Psoas muscle (tissue), 8 donors: ENCODE measurements at regions of chr1 and their contacts with region 1.

Region 1: DNA sequence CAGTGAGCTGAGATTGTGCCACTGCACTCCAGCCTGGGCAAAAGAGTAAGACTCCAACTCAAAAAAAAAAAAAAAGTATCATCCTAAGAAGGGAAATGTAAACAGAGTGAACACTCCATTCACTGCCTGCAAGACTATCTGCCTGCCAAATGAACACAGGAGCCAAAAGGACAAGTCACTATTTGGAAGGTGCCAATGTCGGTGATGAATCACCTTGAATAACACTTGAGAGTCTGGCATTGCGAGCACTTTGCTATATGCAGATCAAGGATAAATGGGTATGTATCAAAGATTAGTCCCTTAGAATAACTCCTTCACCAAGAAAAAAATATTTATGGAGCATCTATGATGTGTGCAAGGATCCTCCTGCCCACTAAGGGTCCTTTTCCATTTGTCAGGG is 6.6 kb downstream of the UBR4 start:
- DNase-seq: no peak
- ATAC-seq: peak; percentile 91 to 98 (median 94)
- H3K4me3 ChIP-seq: no peak overlapping the region
- H3K27ac ChIP-seq: peak overlapping the region; percentile 65
- H3K4me1 ChIP-seq: peaks cover 57% of the 10 kb centered on the region
- H3K27me3 ChIP-seq: no peaks in the 10 kb centered on the region
- CTCF ChIP-seq: no peak

Region 2: DNA sequence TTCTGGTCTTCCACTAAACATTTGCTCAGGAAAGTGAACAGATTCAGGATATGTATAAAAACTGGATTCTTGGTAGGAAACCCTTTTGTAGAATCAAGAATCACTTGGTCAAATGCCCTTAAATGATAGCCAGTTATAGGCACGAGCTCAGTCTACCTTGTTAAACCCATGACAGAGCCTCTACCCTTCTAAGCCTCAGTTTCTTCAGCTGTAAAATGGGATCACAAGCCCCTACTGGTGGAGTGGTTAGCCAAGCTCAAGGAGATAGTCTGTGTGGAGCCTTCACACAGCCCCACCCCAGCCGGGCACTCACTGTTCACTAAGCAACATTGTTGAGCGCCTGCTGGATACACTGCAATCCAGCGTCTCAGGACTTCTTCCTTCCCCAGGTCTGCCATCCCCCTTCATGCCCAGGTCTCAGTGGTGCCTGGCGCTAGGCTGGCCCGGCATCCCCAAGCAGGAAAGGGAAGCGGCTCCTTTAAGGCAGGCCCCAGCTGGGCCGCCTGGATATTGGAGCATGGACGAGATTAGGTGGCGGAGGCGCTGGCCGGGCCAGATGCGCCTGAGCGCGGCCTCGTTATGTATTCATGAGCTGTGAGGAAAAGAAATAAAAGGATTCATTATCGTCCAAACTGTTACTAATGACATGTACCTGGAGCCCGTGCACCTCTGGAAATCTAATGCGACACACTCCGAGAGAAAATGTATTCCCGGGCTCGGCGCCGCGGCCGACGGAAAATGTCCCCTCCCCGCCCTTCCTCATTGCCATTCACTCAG is 419.5 kb before region 1 on chr1:
- intact Hi-C with region 1: no loop called
- DNase-seq: no peak
- ATAC-seq: peak in 1 of 4 donors; percentile 33
- H3K4me3 ChIP-seq: peak overlapping the region; percentile 4
- H3K27ac ChIP-seq: no peak overlapping the region
- H3K4me1 ChIP-seq: no peaks in the 10 kb centered on the region
- H3K27me3 ChIP-seq: peaks cover 0 to 44% (median 0%) of the 10 kb centered on the region in 3 donors
- CTCF ChIP-seq: no peak

Region 3: GRCh38 chr1:19163261-19163660 is 40.2 kb before region 1 on chr1:
- intact Hi-C with region 1: loop called (anchors 5 kb)
- DNase-seq: no peak
- ATAC-seq: no peak
- H3K4me3 ChIP-seq: no peak overlapping the region
- H3K27ac ChIP-seq: no peak overlapping the region
- H3K4me1 ChIP-seq: no peaks in the 10 kb centered on the region
- H3K27me3 ChIP-seq: no peaks in the 10 kb centered on the region
- CTCF ChIP-seq: no peak

Region 4: DNA sequence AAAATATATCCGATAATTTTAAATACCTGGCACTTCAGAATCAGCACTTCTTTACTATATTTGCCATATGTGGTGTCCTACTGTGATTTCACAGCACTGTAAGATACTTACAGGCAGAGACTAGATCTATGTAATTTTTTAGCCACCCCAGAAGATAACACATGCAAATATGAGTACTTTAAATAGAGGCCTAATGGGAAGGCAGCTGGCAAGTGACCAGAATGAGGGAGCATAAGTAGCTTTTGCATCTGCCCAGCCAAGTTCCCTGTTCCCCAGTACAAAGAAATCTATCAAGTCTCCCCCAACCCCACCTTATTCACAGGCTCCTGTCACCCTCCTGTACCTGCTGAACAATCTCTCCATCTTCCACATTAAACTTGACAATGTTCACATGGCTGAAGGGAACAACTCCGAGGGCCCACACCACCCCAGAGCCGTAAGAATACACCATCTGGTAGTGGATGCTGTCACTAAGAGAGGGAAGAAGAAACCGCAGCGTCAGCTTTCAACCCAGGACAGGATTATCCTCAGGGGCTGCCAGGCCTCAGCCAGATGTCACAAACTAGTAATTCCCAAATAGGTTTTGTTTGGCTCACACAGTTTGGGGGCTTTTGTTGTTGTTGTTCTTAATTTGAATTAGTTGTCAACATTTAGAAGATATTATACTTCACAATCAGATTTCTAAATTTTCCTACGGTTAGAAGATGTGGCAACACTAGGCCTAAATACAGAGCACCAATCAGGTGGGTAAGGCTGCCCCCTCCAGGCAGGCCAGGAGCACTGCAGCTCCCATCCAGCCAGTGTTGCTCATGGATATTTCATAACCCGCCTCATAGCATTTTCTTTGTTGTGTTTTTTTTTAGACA is 37.5 kb after region 1 on chr1:
- intact Hi-C with region 1: loop called (anchors 2 to 5 kb)
- DNase-seq: peak; percentile 68 to 87
- ATAC-seq: peak; percentile 89 to 95 (median 94)
- H3K4me3 ChIP-seq: peak overlapping the region; percentile 10
- H3K27ac ChIP-seq: peak overlapping the region; percentile 86
- H3K4me1 ChIP-seq: peaks cover 13% of the 10 kb centered on the region
- H3K27me3 ChIP-seq: no peaks in the 10 kb centered on the region
- CTCF ChIP-seq: peak; percentile 98